ENCODE measurements at regions of chr20 and their contacts with region 1.

Region 1: DNA sequence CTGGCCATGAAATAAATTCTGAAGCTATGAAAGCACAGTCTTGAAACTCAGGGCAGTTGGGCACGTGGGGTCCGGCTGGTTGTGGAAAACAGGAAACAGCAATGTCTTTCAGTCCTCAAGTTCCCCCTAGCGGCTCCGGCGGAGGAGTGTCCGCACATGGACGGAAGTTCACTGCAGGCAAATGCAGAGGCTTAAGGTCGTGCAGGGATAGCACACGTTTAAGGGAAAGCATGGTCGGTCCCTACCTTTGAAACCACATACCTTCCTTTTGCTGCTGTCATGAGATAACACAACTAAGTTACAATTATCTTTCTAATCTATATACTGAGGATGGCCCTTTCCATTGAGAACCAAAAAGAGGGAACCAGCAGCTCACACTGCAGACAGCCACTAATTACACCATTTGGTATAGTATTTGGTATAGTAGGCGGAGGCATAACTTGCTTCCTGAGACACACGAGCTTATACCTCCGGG is 52.6 kb upstream of the NFATC2 start:
- DNase-seq: peak; percentile 73
- ATAC-seq: peak; percentile 99
- H3K4me3 ChIP-seq: no peak overlapping the region
- H3K27ac ChIP-seq: no peak overlapping the region
- H3K4me1 ChIP-seq: peaks cover 6 to 11% of the 10 kb centered on the region in 2 experiments; a peak in 3 of 4 replicates
- H3K27me3 ChIP-seq: no peaks in the 10 kb centered on the region
- CTCF ChIP-seq: peak; percentile 75 to 89 (median 88)
- POLR2A ChIP-seq: no peak
- RAD21 ChIP-seq: peak; percentile 97

Region 2: DNA sequence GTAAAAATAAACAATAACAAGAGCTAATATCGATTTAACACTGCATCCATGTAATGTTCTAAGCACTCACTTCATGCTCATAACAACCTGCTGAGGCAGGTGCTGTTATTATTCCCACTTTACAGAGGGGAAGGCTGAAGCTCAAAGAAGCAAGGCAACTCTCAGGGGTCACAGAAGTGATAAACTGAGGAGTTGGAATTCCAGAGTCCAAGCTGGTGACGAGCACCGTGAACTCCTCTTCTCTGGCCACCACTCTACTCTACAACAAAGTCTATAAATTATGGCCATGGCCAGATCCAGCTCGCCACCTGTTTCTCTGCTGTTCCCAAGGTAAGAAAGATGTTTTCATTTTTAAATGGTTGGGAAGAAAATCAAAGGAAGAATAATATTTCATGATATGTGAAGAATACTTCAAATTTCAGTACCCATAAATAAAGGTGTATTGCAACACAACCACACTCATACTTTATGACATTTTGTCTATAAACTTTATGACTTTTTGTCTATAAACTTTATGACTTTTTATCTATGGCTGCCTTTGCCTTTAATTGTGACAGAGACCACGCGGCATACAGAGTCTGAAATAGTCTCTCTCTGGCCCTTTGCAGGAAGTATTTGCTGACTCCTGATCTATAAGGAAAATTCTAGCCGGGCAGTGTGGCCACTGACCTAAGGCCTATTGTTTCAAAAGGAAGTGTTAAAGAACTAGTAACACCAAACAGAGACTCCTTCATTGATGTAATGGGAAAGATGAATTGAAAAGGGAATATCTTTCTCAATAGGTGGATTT is 459.0 kb before region 1 on chr20:
- CTCF ChIA-PET with region 1: no interaction called
- POLR2A ChIA-PET with region 1: no interaction called
- RAD21 ChIA-PET with region 1: no interaction called
- intact Hi-C with region 1: no loop called
- DNase-seq: no peak
- ATAC-seq: no peak
- H3K4me3 ChIP-seq: no peak overlapping the region
- H3K27ac ChIP-seq: no peak overlapping the region
- H3K4me1 ChIP-seq: no peaks in the 10 kb centered on the region
- H3K27me3 ChIP-seq: no peaks in the 10 kb centered on the region
- CTCF ChIP-seq: no peak
- POLR2A ChIP-seq: no peak
- RAD21 ChIP-seq: no peak

Region 3: GRCh38 chr20:51372176-51372803 is 222.8 kb before region 1 on chr20:
- CTCF ChIA-PET with region 1: interaction called, 7 read pairs
- POLR2A ChIA-PET with region 1: no interaction called
- RAD21 ChIA-PET with region 1: no interaction called
- intact Hi-C with region 1: loop called (anchors 1 kb)
- DNase-seq: peak; percentile 49
- ATAC-seq: peak; percentile 99
- H3K4me3 ChIP-seq: no peak overlapping the region
- H3K27ac ChIP-seq: no peak overlapping the region
- H3K4me1 ChIP-seq: peaks cover 0 to 7% of the 10 kb centered on the region in 2 experiments; a peak in 1 of 4 replicates
- H3K27me3 ChIP-seq: no peaks in the 10 kb centered on the region
- CTCF ChIP-seq: peak; percentile 71 to 88 (median 79); a peak in 5 of 6 replicates
- POLR2A ChIP-seq: no peak
- RAD21 ChIP-seq: peak; percentile 91

Region 4: GRCh38 chr20:51378171-51378929 is 216.7 kb before region 1 on chr20:
- CTCF ChIA-PET with region 1: interaction called, 19 read pairs
- POLR2A ChIA-PET with region 1: no interaction called
- RAD21 ChIA-PET with region 1: interaction called in 1 of 2 experiments, 6 read pairs
- intact Hi-C with region 1: no loop called
- DNase-seq: no peak
- ATAC-seq: peak; percentile 71; the same call in 1 of the 2 replicates
- H3K4me3 ChIP-seq: no peak overlapping the region
- H3K27ac ChIP-seq: no peak overlapping the region
- H3K4me1 ChIP-seq: peaks cover 3 to 8% of the 10 kb centered on the region in 2 experiments; a peak in 2 of 4 replicates
- H3K27me3 ChIP-seq: no peaks in the 10 kb centered on the region
- CTCF ChIP-seq: peak; percentile 23 to 55 (median 27); a peak in 4 of 6 replicates
- POLR2A ChIP-seq: no peak
- RAD21 ChIP-seq: peak; percentile 77

Region 5: DNA sequence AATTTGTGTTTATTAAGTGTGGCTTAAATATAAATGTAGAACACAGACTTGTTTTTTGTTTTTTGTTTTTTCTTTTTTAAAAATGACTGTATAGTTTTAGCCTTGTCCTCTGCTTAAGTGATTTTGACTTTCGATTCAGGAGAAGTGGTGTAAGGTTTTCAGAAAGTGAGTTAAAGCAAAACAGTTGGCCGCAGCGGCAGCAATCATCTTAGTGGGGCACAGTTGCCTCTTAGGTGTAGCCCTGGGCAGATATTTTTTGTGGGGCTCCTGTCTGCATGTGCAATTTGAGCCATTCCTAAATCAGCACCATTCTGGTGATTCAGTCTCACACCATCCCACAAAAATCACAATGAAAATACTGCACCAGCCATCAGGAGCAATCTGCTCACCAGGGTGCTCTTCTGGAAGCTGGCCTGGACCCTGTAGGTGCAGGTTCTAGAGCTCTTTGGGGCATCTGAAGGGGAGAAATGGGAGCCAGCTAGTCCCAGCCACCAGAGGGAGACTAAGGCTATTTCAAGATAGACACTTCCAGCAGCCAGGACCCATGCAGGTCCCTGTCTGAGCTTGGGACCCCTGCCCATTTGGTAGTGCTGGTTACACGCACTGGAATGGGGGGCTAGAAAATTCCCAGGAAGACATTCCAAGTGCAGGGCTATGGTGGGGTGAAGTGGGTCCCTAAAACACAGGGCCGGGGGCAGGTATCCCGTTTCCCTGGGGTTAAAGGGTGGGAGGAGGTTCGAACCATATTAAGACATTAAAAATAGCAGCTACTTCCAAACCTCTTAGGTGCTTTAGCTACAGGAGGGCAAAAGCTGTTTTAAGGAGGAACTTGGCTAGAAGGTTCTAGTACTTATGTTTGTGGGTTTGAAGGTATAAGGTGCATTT is 209.2 kb before region 1 on chr20:
- CTCF ChIA-PET with region 1: interaction called, 56 read pairs
- POLR2A ChIA-PET with region 1: no interaction called
- RAD21 ChIA-PET with region 1: interaction called, 4 to 13 read pairs
- intact Hi-C with region 1: loop called (anchors 1 kb)
- DNase-seq: peak; percentile 24
- ATAC-seq: peak; percentile 87
- H3K4me3 ChIP-seq: no peak overlapping the region
- H3K27ac ChIP-seq: no peak overlapping the region
- H3K4me1 ChIP-seq: no peaks in the 10 kb centered on the region; a peak in 1 of 4 replicates
- H3K27me3 ChIP-seq: no peaks in the 10 kb centered on the region
- CTCF ChIP-seq: peak; percentile 72 to 76 (median 72); a peak in 5 of 6 replicates
- POLR2A ChIP-seq: no peak
- RAD21 ChIP-seq: peak; percentile 81

Region 6: GRCh38 chr20:51469578-51470498 is 125.3 kb before region 1 on chr20:
- CTCF ChIA-PET with region 1: no interaction called
- POLR2A ChIA-PET with region 1: no interaction called
- RAD21 ChIA-PET with region 1: no interaction called
- intact Hi-C with region 1: no loop called
- DNase-seq: no peak
- ATAC-seq: no peak
- H3K4me3 ChIP-seq: no peak overlapping the region
- H3K27ac ChIP-seq: no peak overlapping the region
- H3K4me1 ChIP-seq: no peaks in the 10 kb centered on the region
- H3K27me3 ChIP-seq: no peaks in the 10 kb centered on the region
- CTCF ChIP-seq: no peak
- POLR2A ChIP-seq: no peak
- RAD21 ChIP-seq: no peak

Region 7: GRCh38 chr20:51573576-51574243 is 21.4 kb before region 1 on chr20:
- CTCF ChIA-PET with region 1: no interaction called
- POLR2A ChIA-PET with region 1: no interaction called
- RAD21 ChIA-PET with region 1: no interaction called
- intact Hi-C with region 1: no loop called
- DNase-seq: no peak
- ATAC-seq: no peak
- H3K4me3 ChIP-seq: no peak overlapping the region
- H3K27ac ChIP-seq: no peak overlapping the region
- H3K4me1 ChIP-seq: peaks cover 0 to 8% of the 10 kb centered on the region in 2 experiments; a peak in 2 of 4 replicates
- H3K27me3 ChIP-seq: no peaks in the 10 kb centered on the region
- CTCF ChIP-seq: no peak
- POLR2A ChIP-seq: no peak
- RAD21 ChIP-seq: no peak